Right ventricle myocardium superior (tissue), 1 donor: ENCODE measurements at regions of chr2 and their contacts with region 1.

Region 1: DNA sequence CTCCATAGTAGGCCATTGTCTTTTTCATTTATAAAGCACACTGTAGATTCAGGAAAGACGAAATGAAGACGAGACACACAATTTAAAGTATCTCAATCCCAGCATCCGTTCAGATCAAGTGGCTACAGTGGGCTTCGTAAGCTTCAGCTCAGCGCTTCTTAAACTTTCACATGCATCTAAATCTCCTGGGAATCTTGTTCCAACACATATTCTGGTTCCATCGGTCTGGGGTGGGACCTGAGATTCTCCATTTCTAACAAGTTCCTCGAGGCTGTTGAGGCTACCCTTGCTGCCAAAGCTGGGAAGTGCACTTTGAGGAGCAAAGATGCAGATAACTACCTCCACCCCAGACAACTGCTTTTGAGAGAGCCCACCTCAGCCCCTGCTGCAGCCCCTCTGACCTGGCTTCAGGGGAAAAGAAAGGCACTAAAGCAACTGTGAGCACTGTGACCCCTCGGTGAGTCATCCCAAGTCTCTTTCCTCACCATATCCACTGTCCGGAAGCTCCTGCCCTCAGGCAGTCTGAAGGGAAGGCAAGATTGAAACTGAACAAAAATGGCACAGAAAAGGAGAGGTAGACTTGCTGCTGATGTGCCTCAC is 201.1 kb upstream of the FBXO11 start:
- DNase-seq: no peak
- ATAC-seq: no peak

Region 2: GRCh38 chr2:47437287-47437686 is 670.1 kb before region 1 on chr2:
- intact Hi-C with region 1: loop called (anchors 10 kb)
- DNase-seq: no peak
- ATAC-seq: peak; percentile 74

Region 3: GRCh38 chr2:47503481-47504070 is 603.9 kb before region 1 on chr2:
- intact Hi-C with region 1: no loop called
- DNase-seq: no peak
- ATAC-seq: no peak

Region 4: GRCh38 chr2:47782671-47783485 is 324.5 kb before region 1 on chr2 and contains the start of gene MSH6:
- intact Hi-C with region 1: loop called (anchors 10 kb)
- DNase-seq: peak; percentile 92
- ATAC-seq: peak; percentile 99
- total RNA-seq, gene MSH6: 25.0 TPM

Region 5: GRCh38 chr2:47862949-47863348 is 244.5 kb before region 1 on chr2:
- intact Hi-C with region 1: loop called (anchors 5 kb)
- DNase-seq: no peak
- ATAC-seq: no peak

Region 6: DNA sequence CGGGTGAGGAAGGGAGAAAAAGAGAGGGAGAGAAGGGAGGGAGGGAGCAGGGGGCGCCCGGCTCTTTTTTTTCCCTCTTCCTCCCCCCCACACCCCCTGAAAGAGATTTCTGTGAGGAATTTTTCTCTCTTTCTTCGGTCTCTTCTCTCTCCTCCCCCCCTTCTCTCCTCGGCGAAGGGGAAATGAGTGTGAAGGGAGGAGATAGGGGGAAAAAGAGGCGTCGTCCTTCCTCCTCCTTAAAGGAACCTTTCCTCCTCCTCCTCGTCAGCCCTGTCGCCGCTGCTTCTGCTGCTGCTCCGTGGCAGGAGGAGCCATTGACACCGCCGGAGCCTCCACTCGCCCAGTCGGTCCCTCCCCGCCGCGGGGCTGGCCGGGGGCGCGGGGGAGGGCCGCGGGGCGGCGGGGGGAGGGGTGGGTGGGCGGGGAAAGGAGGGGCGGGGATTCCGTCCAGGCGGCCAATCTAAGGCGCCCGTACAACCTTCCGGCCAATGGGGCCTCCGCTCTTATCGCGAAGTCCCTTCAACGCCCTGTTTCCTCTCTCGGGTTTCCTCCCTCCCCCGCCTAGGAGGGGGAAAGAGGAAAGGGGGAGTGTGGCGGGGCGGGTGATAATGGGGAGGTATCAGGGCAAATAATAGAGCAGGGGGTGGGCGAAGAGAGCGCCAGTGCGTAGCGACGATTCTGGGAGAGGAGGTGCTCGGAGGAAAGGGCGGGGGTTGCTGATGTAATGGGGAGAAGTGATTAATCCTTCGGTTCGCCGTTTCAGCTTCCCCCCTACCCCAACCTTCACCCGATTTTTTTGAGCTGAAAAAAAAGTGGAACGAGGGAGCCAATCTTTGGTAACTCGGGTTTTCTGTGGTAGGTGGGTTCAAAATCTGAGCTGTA is 201.0 kb before region 1 on chr2 and contains the start of gene FBXO11:
- intact Hi-C with region 1: loop called (anchors 10 kb)
- DNase-seq: peak; percentile 96
- ATAC-seq: peak; percentile 93
- total RNA-seq, gene FBXO11: 38.2 TPM